MCF 10A (cell line): ENCODE measurements at regions of chr5 and their contacts with region 1.

Region 1: DNA sequence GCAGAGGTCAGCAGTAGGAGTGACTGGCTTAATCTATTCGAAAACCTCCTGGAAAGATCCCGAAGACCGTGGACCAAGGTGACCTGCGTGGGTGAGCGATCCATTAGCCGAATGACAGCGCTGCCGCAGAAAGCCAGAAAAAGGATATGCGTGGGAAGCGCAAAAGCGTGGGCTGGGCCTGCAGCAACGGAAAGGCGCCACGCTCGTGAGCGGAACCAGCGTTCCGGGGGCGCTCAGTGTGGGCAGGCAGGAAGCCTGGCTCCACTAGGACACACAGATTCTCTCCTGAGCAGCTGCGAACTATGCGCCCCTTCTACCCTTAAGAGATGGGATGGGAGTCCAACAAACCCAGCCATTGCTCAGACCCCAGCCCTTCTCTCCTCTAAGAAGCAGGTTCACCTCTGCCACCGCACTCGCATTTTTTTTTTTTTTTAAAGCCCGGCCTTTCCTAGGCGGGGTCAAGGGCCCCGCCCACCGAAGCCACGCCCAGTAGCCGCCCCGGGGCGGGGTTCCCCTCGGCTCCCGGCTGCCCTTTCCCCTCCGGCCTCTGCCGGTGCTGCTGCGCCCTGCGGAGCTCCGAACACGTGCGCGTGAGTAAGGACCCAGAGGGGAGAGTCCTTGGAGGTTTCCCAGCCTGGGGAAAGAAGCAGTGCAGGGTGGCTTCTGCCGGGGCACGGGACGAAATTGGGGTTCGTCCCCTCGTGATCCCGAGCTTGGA is 19.8 kb upstream of the MATR3 start:
- DNase-seq: peak; percentile 95
- H3K4me3 Mint-ChIP-seq: peak overlapping the region; percentile 74
- H3K27ac Mint-ChIP-seq: peak overlapping the region; percentile 65
- H3K4me1 Mint-ChIP-seq: peaks cover 49% of the 10 kb centered on the region
- H3K27me3 Mint-ChIP-seq: no peaks in the 10 kb centered on the region
- CTCF ChIP-seq: peak; percentile 10

Region 2: DNA sequence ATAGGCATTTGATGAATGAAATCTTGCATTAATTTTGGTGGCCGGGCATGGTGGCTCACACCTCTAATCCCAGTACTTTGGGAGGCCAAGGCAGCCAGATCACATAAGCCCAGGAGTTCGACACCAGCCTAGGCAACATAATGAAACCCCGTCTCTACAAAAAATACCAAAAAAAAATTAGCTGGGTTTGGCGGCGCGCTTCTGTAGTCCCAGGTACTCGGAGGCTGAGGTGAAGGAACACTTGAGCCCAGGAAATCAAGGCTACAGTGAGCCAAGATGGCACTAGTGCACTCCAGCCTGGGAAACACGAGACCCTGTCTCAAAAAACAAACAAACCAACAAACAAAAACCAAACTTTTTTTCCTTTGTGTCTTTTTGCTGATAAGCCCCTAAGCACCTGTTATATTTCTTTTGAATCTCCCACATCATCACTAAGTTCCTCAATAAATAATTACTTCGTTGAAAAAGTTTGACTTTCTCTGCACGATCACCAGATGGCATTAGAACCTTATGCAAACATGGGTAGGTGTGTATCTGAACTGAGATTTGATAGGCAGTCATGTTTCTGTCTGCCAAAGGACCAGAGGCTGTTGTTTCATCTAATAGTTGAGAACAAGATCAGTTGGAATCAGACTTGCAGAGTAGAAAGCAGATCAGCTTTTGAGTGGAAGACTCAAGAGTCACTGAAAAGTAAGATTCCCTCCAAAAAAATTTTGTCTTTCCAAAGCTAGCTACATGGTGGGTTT is 14.3 kb after region 1 on chr5:
- CTCF ChIA-PET with region 1: interaction called, 13 read pairs
- POLR2A ChIA-PET with region 1: interaction called, 413 read pairs
- intact Hi-C with region 1: no loop called
- DNase-seq: peak; percentile 47
- H3K4me3 Mint-ChIP-seq: no peak overlapping the region
- H3K27ac Mint-ChIP-seq: no peak overlapping the region
- H3K4me1 Mint-ChIP-seq: peaks cover 26% of the 10 kb centered on the region
- H3K27me3 Mint-ChIP-seq: no peaks in the 10 kb centered on the region
- CTCF ChIP-seq: peak; percentile 12

Region 3: GRCh38 chr5:139293504-139294373 is 20.0 kb after region 1 on chr5 and contains the start of gene MATR3:
- CTCF ChIA-PET with region 1: interaction called, 5 read pairs
- POLR2A ChIA-PET with region 1: interaction called, 413 read pairs
- intact Hi-C with region 1: no loop called
- DNase-seq: peak; percentile 98
- H3K4me3 Mint-ChIP-seq: peak within 1 kb of the TSS; percentile 94
- H3K27ac Mint-ChIP-seq: peak within 1 kb of the TSS; percentile 99
- H3K4me1 Mint-ChIP-seq: peaks cover 37% of the 10 kb centered on the region
- H3K27me3 Mint-ChIP-seq: no peaks in the 10 kb centered on the region
- CTCF ChIP-seq: no peak
- total RNA-seq, gene MATR3: 152 and 159 TPM in 2 replicates

Region 4: GRCh38 chr5:139306197-139306596 is 32.5 kb after region 1 on chr5:
- CTCF ChIA-PET with region 1: interaction called, 6 read pairs
- POLR2A ChIA-PET with region 1: interaction called, 413 read pairs
- intact Hi-C with region 1: no loop called
- DNase-seq: no peak
- H3K4me3 Mint-ChIP-seq: no peak overlapping the region
- H3K27ac Mint-ChIP-seq: no peak overlapping the region
- H3K4me1 Mint-ChIP-seq: peaks cover 57% of the 10 kb centered on the region
- H3K27me3 Mint-ChIP-seq: no peaks in the 10 kb centered on the region
- CTCF ChIP-seq: no peak